Activated B cell treated with CpG ODN at 0.5 μM for 24 hours (primary cell): ENCODE measurements at regions of chr17 and their contacts with region 1.

Region 1: DNA sequence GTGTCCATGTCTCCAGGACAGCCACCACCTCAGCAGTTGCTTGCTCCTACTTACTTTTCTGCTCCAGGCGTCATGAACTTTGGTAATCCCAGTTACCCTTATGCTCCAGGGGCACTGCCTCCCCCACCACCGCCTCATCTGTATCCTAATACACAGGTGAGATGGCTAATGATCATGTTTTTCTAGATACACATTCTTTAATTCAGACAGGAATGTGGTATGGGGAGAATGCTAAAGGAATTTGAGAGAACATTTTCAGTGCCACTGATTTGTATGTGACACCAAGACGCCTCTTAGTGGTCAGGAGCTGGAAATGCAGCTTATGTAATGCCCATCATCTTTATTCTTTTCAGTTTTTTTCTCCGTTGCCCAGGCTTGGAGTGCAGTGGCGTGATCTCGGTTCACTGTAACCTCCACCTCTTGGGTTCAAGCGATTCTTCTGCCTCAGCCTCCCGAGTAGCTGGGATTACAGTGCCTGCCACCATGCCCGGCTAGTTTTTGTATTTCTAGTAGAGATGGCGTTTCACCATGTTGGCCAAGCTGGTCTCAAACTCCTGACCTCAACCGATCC is 8.9 kb upstream of the RAPGEFL1 start:
- DNase-seq: no peak
- ATAC-seq: peak; percentile 85
- H3K4me3 Mint-ChIP-seq: no peak overlapping the region
- H3K27ac Mint-ChIP-seq: no peak overlapping the region
- H3K4me1 Mint-ChIP-seq: no peaks in the 10 kb centered on the region
- H3K27me3 Mint-ChIP-seq: no peaks in the 10 kb centered on the region
- CTCF ChIP-seq: no peak

Region 2: DNA sequence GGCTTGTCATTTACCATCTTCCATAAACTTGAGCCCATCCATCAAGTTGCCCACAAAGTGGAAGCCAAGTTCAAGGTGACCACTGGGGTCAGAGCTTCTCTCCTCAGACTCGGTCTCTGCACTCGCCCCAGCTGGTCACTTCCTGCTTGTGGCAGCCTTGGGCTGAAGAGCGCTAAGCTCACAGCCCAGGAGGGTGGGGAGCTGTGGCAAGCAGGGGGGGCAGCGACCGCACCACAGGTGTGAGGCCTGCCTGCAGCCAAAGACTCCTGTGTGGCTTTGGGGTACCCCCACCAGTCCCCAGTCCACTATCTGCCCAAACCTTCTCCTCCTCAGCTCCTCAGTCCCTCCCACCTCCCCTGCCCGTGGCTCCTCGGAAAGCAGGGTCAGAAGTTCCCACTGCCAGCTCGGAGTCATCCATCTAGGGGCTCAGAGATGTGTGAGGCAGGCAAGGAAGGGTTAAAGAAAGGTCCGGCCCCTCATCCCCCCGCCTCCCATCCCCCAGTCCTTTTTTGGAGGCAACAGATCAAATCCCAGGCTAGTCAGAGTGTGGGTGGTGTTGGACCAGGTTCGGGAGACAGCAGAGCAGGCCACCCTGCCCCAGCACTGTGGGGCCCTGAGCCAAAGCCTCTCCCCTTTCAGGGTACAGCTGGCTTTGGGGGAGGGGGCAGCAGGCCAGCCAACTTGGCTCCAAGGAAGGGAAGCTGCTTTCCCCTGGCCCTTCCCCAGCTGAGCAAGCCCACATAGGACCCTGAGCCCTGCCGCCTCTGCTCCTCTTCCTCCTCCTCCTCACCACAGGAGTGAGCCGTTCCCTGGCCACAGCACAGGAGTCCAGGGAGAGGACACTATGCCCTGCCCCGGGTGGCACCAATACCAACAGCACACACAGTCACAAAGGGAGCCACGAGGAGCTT is 149.9 kb before region 1 on chr17:
- CTCF ChIA-PET with region 1: interaction called, 13 read pairs
- POLR2A ChIA-PET with region 1: no interaction called
- intact Hi-C with region 1: loop called (anchors 1 kb)
- DNase-seq: no peak
- ATAC-seq: no peak
- H3K4me3 Mint-ChIP-seq: no peak overlapping the region
- H3K27ac Mint-ChIP-seq: no peak overlapping the region
- H3K4me1 Mint-ChIP-seq: peaks cover 5% of the 10 kb centered on the region
- H3K27me3 Mint-ChIP-seq: peaks cover 2% of the 10 kb centered on the region
- CTCF ChIP-seq: no peak

Region 3: GRCh38 chr17:40062329-40063186 is 105.8 kb before region 1 on chr17 and contains the start of gene THRA:
- CTCF ChIA-PET with region 1: interaction called, 9 read pairs
- POLR2A ChIA-PET with region 1: interaction called, 5 read pairs
- intact Hi-C with region 1: loop called (anchors 1 kb)
- DNase-seq: peak; percentile 79
- ATAC-seq: peak; percentile 93
- H3K4me3 Mint-ChIP-seq: peak within 1 kb of the TSS; percentile 87
- H3K27ac Mint-ChIP-seq: peak within 1 kb of the TSS; percentile 78
- H3K4me1 Mint-ChIP-seq: peaks cover 39% of the 10 kb centered on the region
- H3K27me3 Mint-ChIP-seq: peaks cover under 1% of the 10 kb centered on the region
- CTCF ChIP-seq: no peak
- total RNA-seq, gene THRA: 5.4 and 5.9 TPM in 2 replicates

Region 4: GRCh38 chr17:40121181-40122135 is 46.9 kb before region 1 on chr17 and contains the start of gene MSL1:
- CTCF ChIA-PET with region 1: interaction called, 17 read pairs
- POLR2A ChIA-PET with region 1: interaction called, 8 read pairs
- intact Hi-C with region 1: no loop called
- DNase-seq: peak; percentile 84
- ATAC-seq: peak; percentile 68
- H3K4me3 Mint-ChIP-seq: peak within 1 kb of the TSS; percentile 82
- H3K27ac Mint-ChIP-seq: peak within 1 kb of the TSS; percentile 50
- H3K4me1 Mint-ChIP-seq: peaks cover 39% of the 10 kb centered on the region
- H3K27me3 Mint-ChIP-seq: no peaks in the 10 kb centered on the region
- CTCF ChIP-seq: no peak
- total RNA-seq, gene MSL1: 84.5 and 101 TPM in 2 replicates